ENCODE measurements at regions of chr2 and their contacts with region 1.

Region 1: DNA sequence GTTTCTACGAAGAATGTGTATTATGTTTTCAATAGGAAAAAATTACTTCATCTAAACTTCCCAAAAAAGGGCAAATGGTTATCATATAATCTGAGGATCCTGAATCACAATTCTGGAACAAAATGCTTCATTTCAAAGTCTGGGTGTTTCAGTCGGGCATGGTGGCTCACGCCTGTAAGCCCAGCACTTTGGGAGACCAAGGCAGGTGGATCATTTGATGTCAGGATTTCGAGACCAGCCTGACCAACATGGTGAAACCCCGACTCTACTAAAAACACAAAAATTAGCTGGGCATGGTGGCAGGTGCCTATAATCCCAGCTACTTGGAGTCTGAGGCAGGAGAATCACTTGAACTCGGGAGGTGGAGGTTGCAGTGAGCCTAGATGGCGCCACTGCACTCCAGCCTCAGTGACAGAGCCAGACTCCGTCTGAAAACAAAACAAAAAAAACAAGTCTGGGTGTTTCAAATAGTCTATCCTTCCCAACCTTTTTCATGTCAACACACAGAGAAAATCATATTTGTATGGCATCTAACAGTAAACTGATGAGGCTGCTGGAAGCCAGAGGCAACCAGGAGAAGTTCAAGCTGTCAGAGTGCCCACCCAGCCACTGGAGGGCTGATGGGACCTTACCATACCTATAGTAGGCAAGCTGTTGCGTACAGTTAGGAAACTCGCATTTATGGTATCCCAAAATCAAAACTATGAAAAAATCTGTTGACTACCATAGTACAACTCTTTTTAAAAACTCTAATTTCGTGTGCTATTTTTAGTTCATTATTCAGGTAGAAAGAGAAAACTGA is 14.6 kb downstream of the NBAS start:
- DNase-seq: no peak
- H3K4me3 Mint-ChIP-seq: no peak overlapping the region
- H3K27ac Mint-ChIP-seq: no peak overlapping the region
- H3K4me1 Mint-ChIP-seq: no peaks in the 10 kb centered on the region
- H3K27me3 Mint-ChIP-seq: no peaks in the 10 kb centered on the region
- CTCF ChIP-seq: no peak

Region 2: GRCh38 chr2:15460112-15460620 is 86.3 kb before region 1 on chr2:
- CTCF ChIA-PET with region 1: no interaction called
- POLR2A ChIA-PET with region 1: no interaction called
- intact Hi-C with region 1: no loop called
- DNase-seq: no peak
- H3K4me3 Mint-ChIP-seq: no peak overlapping the region
- H3K27ac Mint-ChIP-seq: no peak overlapping the region
- H3K4me1 Mint-ChIP-seq: no peaks in the 10 kb centered on the region
- H3K27me3 Mint-ChIP-seq: no peaks in the 10 kb centered on the region
- CTCF ChIP-seq: no peak

Region 3: DNA sequence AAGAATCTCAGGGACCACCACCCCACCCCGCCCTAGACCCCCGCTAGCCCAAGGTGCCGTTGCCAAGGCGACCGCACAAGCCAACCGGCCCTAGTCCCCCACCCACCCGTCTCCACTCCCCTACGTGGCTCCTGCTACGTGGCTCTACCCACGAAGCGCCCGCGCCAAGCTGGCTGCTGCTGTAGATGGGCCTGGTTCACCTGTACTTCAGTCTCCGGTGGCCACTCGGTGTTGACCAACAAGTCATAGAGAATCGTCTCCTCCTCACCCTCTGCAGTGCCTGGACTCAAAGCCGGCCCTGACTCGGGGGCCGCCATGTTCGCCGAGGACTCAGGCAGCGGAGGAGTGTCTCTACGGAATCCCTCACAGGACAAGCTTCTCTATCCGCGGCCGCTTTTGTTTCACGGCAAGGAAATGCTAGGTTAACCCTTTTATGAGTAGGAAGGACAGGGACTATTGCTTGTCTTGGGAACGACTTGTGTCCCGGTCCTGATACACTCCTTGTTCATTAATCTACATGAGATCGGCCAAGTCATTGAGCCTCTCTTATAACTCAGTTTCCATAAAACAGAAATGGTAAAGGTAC is 14.6 kb after region 1 on chr2 and contains the start of gene NBAS:
- CTCF ChIA-PET with region 1: interaction called, 3 read pairs
- POLR2A ChIA-PET with region 1: interaction called, 10 read pairs
- intact Hi-C with region 1: no loop called
- DNase-seq: peak; percentile 90
- H3K4me3 Mint-ChIP-seq: peak within 1 kb of the TSS; percentile 98
- H3K27ac Mint-ChIP-seq: peak within 1 kb of the TSS; percentile 94
- H3K4me1 Mint-ChIP-seq: peaks cover 24% of the 10 kb centered on the region
- H3K27me3 Mint-ChIP-seq: no peaks in the 10 kb centered on the region
- CTCF ChIP-seq: no peak
- total RNA-seq, gene NBAS: 46.4 and 55.6 TPM in 2 replicates